CD14-positive monocyte (primary cell): ENCODE measurements at regions of chr2 and their contacts with region 1.

Region 1: DNA sequence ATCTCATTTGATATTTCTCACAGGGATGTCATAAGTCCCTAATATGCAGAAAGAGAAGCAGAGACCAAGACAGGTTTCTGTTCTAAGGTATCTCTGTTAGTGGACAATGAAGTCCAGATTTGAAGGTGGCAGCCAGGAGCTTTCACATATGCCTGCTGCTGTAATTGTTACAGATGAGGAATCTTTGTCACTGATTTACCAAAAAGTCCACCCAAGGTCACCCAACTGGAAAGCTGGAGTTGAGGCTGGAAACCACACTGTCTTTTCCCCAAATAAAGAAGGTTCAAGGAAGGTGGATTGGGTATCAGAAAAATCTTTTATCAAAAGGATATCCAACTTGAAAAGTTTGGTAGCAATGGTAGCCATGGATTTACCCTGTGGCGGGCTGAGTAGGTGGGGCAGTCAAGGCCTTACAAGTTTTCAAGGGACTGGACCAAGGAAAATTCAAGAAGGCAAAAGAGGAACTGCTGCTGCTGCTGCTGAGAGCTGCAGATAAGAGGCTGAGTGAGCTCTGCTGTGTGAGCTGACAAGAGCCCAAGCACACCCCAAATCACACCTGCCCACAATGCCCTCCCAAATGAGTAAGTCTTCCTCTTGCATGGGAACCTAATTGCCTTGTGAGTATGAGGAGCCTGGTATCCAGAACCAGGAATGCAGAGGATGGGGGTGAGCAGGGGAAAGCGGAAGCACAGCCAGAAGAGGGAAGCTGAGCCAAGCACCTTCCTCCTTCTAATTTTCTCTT is 241.2 kb downstream of the ANAPC1 start:
- DNase-seq: peak in 2 of 3 donors; percentile 62 to 69
- H3K4me3 ChIP-seq: peak overlapping the region in 1 of 3 experiments; percentile 9
- H3K4me3 Mint-ChIP-seq: no peak overlapping the region
- H3K27ac ChIP-seq: peak overlapping the region; percentile 25 to 74
- H3K27ac Mint-ChIP-seq: peak overlapping the region; percentile 73 to 92 (median 79)
- H3K4me1 ChIP-seq: peaks cover 23 to 32% of the 10 kb centered on the region in 2 donors
- H3K4me1 Mint-ChIP-seq: peaks cover 29% of the 10 kb centered on the region
- H3K27me3 ChIP-seq: no peaks in the 10 kb centered on the region
- H3K27me3 Mint-ChIP-seq: peaks cover 0 to 2% (median 0%) of the 10 kb centered on the region in 3 donors
- CTCF ChIP-seq: no peak

Region 2: DNA sequence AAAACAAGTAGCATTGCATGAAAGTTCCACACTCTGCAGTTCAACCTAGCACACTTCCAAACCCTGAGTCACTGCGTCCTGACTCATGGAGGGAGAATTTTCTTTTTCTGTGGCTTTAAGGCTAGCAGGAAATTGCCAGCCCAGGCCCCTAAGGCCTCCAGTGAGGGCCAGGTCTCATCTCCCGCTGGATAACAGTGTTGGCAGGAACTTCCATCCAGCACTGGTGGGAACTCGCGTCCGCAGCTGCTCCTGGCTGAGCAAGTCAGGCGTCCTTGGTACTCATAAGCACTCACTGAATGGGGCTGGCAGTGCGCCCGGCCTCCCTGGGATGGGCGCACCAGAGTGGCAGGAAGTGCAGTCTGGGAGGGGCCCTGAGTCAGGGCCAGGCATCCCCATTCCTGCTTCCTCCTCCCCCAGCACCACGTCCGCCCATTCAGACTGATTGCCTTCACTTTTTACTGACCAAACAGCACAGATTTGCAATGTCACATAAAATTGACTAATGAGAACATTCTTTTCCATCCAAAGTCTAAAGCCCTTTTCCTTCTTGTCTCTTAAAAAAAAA is 1541.4 kb before region 1 on chr2:
- intact Hi-C with region 1: no loop called
- DNase-seq: peak; percentile 48 to 73 (median 50)
- H3K4me3 ChIP-seq: peak overlapping the region in 1 of 3 experiments; percentile 42
- H3K4me3 Mint-ChIP-seq: peak overlapping the region; percentile 41 to 81
- H3K27ac ChIP-seq: no peak overlapping the region
- H3K27ac Mint-ChIP-seq: peak overlapping the region in 6 of 7 donors; percentile 32 to 78 (median 58)
- H3K4me1 ChIP-seq: peaks cover 11 to 22% of the 10 kb centered on the region in 2 donors
- H3K4me1 Mint-ChIP-seq: peaks cover 16% of the 10 kb centered on the region
- H3K27me3 ChIP-seq: peaks cover 0 to 6% of the 10 kb centered on the region in 2 donors
- H3K27me3 Mint-ChIP-seq: peaks cover 7 to 14% (median 8%) of the 10 kb centered on the region in 3 donors
- CTCF ChIP-seq: no peak

Region 3: DNA sequence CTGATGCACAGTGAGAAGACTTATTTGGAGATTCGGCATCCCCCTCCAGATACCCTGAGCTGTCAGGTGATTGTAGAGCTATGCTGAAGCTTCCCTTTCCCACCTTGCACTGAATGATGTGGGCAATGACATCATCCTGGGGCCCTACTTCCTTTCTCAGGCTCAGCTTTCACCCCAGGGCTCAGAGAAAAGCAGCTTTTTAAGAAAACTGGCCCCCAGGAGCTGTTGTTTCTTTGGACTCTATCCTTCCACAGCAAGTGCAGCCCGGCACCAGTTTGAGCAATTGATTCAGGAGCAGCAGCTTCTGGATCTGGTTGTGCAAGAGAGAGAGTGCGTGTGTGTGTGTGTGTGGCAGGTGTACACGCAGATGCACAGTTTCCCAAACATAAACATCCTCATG is 10.1 kb before region 1 on chr2:
- intact Hi-C with region 1: loop called in 1 of 2 experiments (anchors 1 kb)
- DNase-seq: peak; percentile 58 to 81 (median 62)
- H3K4me3 ChIP-seq: no peak overlapping the region
- H3K4me3 Mint-ChIP-seq: peak overlapping the region; percentile 16 to 69
- H3K27ac ChIP-seq: peak overlapping the region in 1 of 2 donors; percentile 80
- H3K27ac Mint-ChIP-seq: peak overlapping the region; percentile 85 to 89 (median 87)
- H3K4me1 ChIP-seq: peaks cover 23 to 33% of the 10 kb centered on the region in 2 donors
- H3K4me1 Mint-ChIP-seq: peaks cover 26% of the 10 kb centered on the region
- H3K27me3 ChIP-seq: no peaks in the 10 kb centered on the region
- H3K27me3 Mint-ChIP-seq: no peaks in the 10 kb centered on the region
- CTCF ChIP-seq: no peak

Region 4: GRCh38 chr2:111957872-111958354 is 315.2 kb after region 1 on chr2:
- intact Hi-C with region 1: no loop called
- DNase-seq: no peak
- H3K4me3 ChIP-seq: no peak overlapping the region
- H3K4me3 Mint-ChIP-seq: no peak overlapping the region
- H3K27ac ChIP-seq: no peak overlapping the region
- H3K27ac Mint-ChIP-seq: peak overlapping the region in 1 of 7 donors; percentile 13
- H3K4me1 ChIP-seq: no peaks in the 10 kb centered on the region
- H3K4me1 Mint-ChIP-seq: peaks cover 7% of the 10 kb centered on the region
- H3K27me3 ChIP-seq: no peaks in the 10 kb centered on the region
- H3K27me3 Mint-ChIP-seq: peaks cover 0 to 3% (median 2%) of the 10 kb centered on the region in 3 donors
- CTCF ChIP-seq: no peak